Endothelial cell of umbilical vein (primary cell): ENCODE measurements at regions of chr4 and their contacts with region 1.

Region 1: DNA sequence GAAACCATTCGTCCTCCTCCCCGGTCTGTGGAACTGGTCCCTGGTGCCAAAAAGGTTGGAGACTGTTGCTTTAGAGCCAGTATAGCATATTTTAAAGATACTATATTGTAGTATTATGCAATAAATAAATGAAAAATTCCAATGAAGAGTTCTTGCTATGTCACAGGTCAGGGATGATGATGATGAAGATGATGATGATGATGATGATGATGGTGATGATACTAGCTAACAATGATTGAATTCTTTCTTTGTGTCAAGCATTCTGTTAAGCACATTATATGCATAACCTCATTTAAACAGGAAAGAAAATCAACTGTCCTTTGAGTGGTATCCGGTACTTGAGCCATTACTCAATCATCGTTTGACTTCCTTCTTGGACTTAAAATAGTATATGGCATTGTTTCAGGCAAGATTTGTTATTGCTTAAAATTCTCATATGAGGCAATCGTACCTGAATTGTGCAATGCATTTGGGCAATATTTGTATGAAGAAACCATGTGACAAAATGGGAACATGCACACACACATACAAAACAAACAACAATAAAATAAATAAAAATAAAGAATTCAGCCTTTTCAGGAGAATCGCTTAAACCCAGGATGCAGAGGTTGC is 22.8 kb upstream of the TLR2 start:
- DNase-seq: peak; percentile 32
- H3K4me3 ChIP-seq: no peak overlapping the region
- H3K27ac ChIP-seq: no peak overlapping the region
- H3K4me1 ChIP-seq: no peaks in the 10 kb centered on the region
- H3K27me3 ChIP-seq: peaks cover 0 to 3% of the 10 kb centered on the region in 2 experiments
- CTCF ChIP-seq: no peak
- POLR2A ChIP-seq: no peak

Region 2: GRCh38 chr4:153676998-153677397 is 15.7 kb after region 1 on chr4:
- CTCF ChIA-PET with region 1: no interaction called
- POLR2A ChIA-PET with region 1: no interaction called
- dilution Hi-C with region 1: no loop called
- intact Hi-C with region 1: loop called (anchors 2 kb)
- DNase-seq: peak; percentile 86
- H3K4me3 ChIP-seq: no peak overlapping the region
- H3K27ac ChIP-seq: peak overlapping the region; percentile 35
- H3K4me1 ChIP-seq: peaks cover 14% of the 10 kb centered on the region
- H3K27me3 ChIP-seq: peaks cover 4 to 7% of the 10 kb centered on the region in 2 experiments
- CTCF ChIP-seq: no peak
- POLR2A ChIP-seq: no peak